Naive thymus-derived CD4-positive, alpha-beta T cell (primary cell): ENCODE measurements at regions of chr13 and their contacts with region 1.

Region 1: DNA sequence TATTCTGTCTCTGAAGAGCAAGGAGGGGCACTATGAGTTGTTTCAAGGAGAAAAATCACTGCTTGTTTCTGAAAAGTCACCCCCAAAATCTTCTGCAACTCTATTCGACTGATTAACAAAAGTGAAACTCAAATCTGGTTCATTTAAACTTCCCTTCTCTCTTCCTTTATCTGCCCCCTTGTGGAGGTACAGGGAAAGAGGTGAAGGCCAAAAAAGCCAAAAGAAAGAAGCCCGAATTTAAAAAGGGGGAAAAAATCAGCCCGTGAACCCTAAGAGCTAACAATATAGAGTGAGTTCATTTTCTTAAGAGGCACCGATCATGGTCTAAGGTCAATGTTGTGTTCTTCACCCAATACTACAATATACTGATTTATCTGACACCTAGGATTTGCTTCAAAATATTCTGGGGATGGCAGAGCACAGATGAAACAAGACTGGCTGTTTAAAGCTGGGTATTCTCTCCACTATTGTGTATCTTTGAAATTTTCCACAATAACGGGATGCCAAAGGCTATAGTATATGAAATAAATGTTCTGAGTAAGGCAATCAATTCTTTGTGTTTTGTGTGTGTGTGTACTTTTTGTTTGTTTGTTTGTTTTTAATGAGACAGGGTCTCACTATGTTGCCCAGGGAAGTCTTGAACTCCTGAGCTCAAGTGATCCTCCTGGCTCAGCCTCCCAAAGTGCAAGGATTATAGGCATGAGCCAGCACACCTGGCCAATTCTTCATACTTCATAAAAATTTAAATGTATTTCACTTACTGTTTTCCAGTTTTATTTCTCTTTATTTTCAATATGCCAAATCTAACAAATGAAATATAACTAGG is 55.0 kb upstream of the EEF1AKMT1 start:
- DNase-seq: peak in 7 of 9 donors; percentile 46 to 75 (median 67)
- ATAC-seq: peak; percentile 93
- H3K4me3 ChIP-seq: no peak overlapping the region
- H3K4me3 Mint-ChIP-seq: peak overlapping the region in 8 of 10 donors; percentile 51 to 81 (median 73)
- H3K27ac ChIP-seq: peak overlapping the region; percentile 14
- H3K27ac Mint-ChIP-seq: peak overlapping the region; percentile 35 to 87 (median 77)
- H3K4me1 ChIP-seq: no peaks in the 10 kb centered on the region
- H3K4me1 Mint-ChIP-seq: peaks cover 7 to 15% (median 10%) of the 10 kb centered on the region in 7 donors
- H3K27me3 ChIP-seq: no peaks in the 10 kb centered on the region
- H3K27me3 Mint-ChIP-seq: no peaks in the 10 kb centered on the region

Region 2: GRCh38 chr13:20182231-20182846 is 646.4 kb before region 1 on chr13:
- CTCF ChIA-PET with region 1: no interaction called
- POLR2A ChIA-PET with region 1: no interaction called
- intact Hi-C with region 1: loop called in 1 of 2 experiments (anchors 1 kb)
- DNase-seq: peak in 7 of 9 donors; percentile 43 to 77 (median 67)
- ATAC-seq: peak; percentile 99
- H3K4me3 ChIP-seq: no peak overlapping the region
- H3K4me3 Mint-ChIP-seq: no peak overlapping the region
- H3K27ac ChIP-seq: no peak overlapping the region
- H3K27ac Mint-ChIP-seq: no peak overlapping the region
- H3K4me1 ChIP-seq: no peaks in the 10 kb centered on the region
- H3K4me1 Mint-ChIP-seq: no peaks in the 10 kb centered on the region
- H3K27me3 ChIP-seq: peaks cover 0 to 10% of the 10 kb centered on the region in 2 donors
- H3K27me3 Mint-ChIP-seq: peaks cover 37 to 48% (median 43%) of the 10 kb centered on the region in 5 donors

Region 3: DNA sequence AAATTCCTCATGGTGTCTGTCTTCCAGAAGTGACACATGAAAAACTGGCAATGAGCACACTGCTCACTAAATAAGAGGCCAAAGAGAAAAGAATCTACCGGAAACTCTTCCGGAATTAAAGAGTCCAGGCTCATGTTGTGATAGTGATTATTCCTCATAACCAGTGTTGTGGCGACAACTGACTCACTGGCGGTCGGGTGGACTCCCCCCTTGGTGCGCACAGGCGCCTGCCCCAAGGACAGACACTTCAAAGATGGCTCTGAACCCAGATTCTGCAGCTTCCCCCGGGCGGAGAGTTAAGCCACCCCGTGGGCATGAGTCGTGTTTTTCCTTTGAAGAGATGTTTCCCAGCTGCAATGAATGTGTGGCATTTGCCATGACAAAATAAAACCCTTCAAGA is 115.0 kb before region 1 on chr13:
- CTCF ChIA-PET with region 1: interaction called, 19 read pairs
- POLR2A ChIA-PET with region 1: no interaction called
- intact Hi-C with region 1: loop called (anchors 1 kb)
- DNase-seq: no peak
- ATAC-seq: no peak
- H3K4me3 ChIP-seq: no peak overlapping the region
- H3K4me3 Mint-ChIP-seq: no peak overlapping the region
- H3K27ac ChIP-seq: no peak overlapping the region
- H3K27ac Mint-ChIP-seq: no peak overlapping the region
- H3K4me1 ChIP-seq: no peaks in the 10 kb centered on the region
- H3K4me1 Mint-ChIP-seq: peaks cover 5 to 13% (median 8%) of the 10 kb centered on the region in 7 donors
- H3K27me3 ChIP-seq: no peaks in the 10 kb centered on the region
- H3K27me3 Mint-ChIP-seq: peaks cover 0 to 7% (median 6%) of the 10 kb centered on the region in 5 donors

Region 4: DNA sequence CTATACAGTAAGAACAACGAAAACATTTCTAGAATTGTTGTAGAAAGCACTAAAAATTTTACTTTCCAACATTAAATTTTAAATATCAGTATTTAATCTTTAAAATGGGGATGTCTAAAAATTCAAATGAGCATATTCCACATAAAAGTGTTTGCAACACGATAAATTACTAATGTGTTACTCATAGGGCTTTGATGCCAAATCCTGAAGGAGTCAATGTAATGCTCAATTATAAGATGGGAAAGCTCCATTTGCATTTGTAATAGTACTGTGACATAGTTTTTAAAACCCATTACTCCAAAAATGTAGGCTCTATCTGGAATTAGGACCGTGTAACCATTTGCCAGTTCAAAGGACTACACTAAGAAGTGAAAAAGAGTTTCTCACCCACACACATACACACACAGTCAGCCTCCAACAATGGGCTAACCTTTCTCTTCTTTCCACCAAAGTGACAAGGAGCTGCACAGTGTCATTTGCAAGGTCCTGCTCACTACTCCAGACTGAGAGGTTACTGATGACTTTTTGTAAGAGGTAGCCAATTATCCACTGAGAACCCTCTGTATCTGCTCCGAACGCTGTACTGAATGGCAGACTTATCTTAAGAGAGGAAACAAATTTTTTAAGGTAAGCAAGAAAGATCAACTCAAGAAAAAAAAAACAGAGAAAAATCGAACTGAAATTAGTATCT is 28.9 kb before region 1 on chr13:
- CTCF ChIA-PET with region 1: no interaction called
- POLR2A ChIA-PET with region 1: no interaction called
- intact Hi-C with region 1: no loop called
- DNase-seq: no peak
- ATAC-seq: no peak
- H3K4me3 ChIP-seq: no peak overlapping the region
- H3K4me3 Mint-ChIP-seq: no peak overlapping the region
- H3K27ac ChIP-seq: no peak overlapping the region
- H3K27ac Mint-ChIP-seq: peak overlapping the region in 1 of 9 donors; percentile 6
- H3K4me1 ChIP-seq: no peaks in the 10 kb centered on the region
- H3K4me1 Mint-ChIP-seq: peaks cover 9 to 19% (median 15%) of the 10 kb centered on the region in 7 donors
- H3K27me3 ChIP-seq: no peaks in the 10 kb centered on the region
- H3K27me3 Mint-ChIP-seq: no peaks in the 10 kb centered on the region

Region 5: GRCh38 chr13:20902438-20903163 is 73.8 kb after region 1 on chr13 and contains the start of gene XPO4:
- CTCF ChIA-PET with region 1: no interaction called
- POLR2A ChIA-PET with region 1: interaction called, 5 read pairs
- intact Hi-C with region 1: loop called in 1 of 2 experiments (anchors 2 kb)
- DNase-seq: peak; percentile 68 to 85 (median 77)
- ATAC-seq: peak; percentile 97
- H3K4me3 ChIP-seq: peak within 1 kb of the TSS; percentile 98
- H3K4me3 Mint-ChIP-seq: peak within 1 kb of the TSS; percentile 93 to 98 (median 96)
- H3K27ac ChIP-seq: peak within 1 kb of the TSS; percentile 83
- H3K27ac Mint-ChIP-seq: peak within 1 kb of the TSS; percentile 89 to 98 (median 95)
- H3K4me1 ChIP-seq: peaks cover 10 to 21% of the 10 kb centered on the region in 2 donors
- H3K4me1 Mint-ChIP-seq: peaks cover 15 to 41% (median 32%) of the 10 kb centered on the region in 7 donors
- H3K27me3 ChIP-seq: no peaks in the 10 kb centered on the region
- H3K27me3 Mint-ChIP-seq: peaks cover 0 to 3% (median 0%) of the 10 kb centered on the region in 5 donors
- total RNA-seq, gene XPO4: 20.9 to 26.5 (median 23.5) TPM

Region 6: GRCh38 chr13:20924758-20925394 is 96.1 kb after region 1 on chr13:
- CTCF ChIA-PET with region 1: interaction called, 7 read pairs
- POLR2A ChIA-PET with region 1: no interaction called
- intact Hi-C with region 1: loop called (anchors 1 to 2 kb)
- DNase-seq: peak; percentile 26 to 68 (median 59)
- ATAC-seq: peak; percentile 72
- H3K4me3 ChIP-seq: no peak overlapping the region
- H3K4me3 Mint-ChIP-seq: no peak overlapping the region
- H3K27ac ChIP-seq: no peak overlapping the region
- H3K27ac Mint-ChIP-seq: no peak overlapping the region
- H3K4me1 ChIP-seq: no peaks in the 10 kb centered on the region
- H3K4me1 Mint-ChIP-seq: no peaks in the 10 kb centered on the region
- H3K27me3 ChIP-seq: no peaks in the 10 kb centered on the region
- H3K27me3 Mint-ChIP-seq: peaks cover 0 to 6% (median 0%) of the 10 kb centered on the region in 5 donors